ENCODE measurements at regions of chr10 and their contacts with region 1.

Region 1: GRCh38 chr10:69408318-69409175 is 8.2 kb downstream of the TACR2 start:
- DNase-seq: peak; percentile 85 to 96
- H3K4me3 ChIP-seq: peak overlapping the region; percentile 50; the same call in 1 of the 2 replicates
- H3K27ac ChIP-seq: no peak overlapping the region
- H3K4me1 ChIP-seq: peaks cover 26% of the 10 kb centered on the region
- H3K27me3 ChIP-seq: no peaks in the 10 kb centered on the region
- CTCF ChIP-seq: peak; percentile 54

Region 2: DNA sequence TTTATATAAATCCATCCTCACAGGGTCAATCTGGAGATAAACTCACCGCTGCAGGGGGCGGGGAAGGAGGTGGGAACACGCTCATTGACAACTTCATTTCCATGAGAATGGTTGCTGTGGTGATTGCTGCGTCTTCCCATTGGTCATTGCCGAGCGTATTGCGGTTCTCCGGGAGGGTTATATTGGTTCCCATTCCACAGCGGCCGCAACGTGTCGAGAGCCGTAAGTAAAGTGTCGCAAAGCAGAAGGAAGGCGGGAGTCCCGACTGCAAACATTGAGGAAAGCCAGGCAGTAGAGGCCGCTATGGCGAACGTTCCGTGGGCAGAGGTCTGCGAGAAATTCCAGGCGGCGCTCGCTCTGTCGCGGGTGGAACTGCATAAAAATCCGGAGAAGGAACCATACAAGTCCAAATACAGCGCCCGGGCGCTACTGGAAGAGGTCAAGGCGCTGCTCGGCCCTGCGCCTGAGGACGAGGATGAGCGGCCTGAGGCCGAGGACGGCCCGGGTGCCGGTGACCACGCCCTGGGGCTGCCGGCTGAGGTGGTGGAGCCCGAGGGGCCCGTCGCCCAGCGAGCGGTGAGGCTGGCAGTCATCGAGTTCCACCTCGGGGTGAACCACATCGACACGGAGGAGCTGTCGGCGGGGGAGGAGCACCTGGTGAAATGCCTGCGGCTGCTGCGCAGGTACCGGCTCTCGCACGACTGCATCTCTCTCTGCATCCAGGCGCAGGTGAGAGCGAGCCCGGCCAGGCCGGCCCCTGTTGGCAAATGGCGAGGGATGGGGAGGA is 419.8 kb before region 1 on chr10 and contains the start of gene KIFBP:
- CTCF ChIA-PET with region 1: no interaction called
- POLR2A ChIA-PET with region 1: no interaction called
- intact Hi-C with region 1: loop called (anchors 5 kb)
- DNase-seq: peak; percentile 94 to 97
- H3K4me3 ChIP-seq: peak within 1 kb of the TSS; percentile 84
- H3K27ac ChIP-seq: 0 out of 2 replicates have a peak within 1 kb of the TSS, but pooled peaks have one; percentile 20
- H3K4me1 ChIP-seq: peaks cover 19% of the 10 kb centered on the region
- H3K27me3 ChIP-seq: no peaks in the 10 kb centered on the region
- CTCF ChIP-seq: peak; percentile 62; the same call in 1 of the 2 replicates
- total RNA-seq, gene KIFBP: 26.0 and 30.1 TPM in 2 replicates

Region 3: GRCh38 chr10:69123747-69124562 is 284.6 kb before region 1 on chr10 and contains the start of gene VPS26A:
- CTCF ChIA-PET with region 1: no interaction called
- POLR2A ChIA-PET with region 1: no interaction called
- intact Hi-C with region 1: loop called (anchors 2 kb)
- DNase-seq: peak; percentile 91 to 100
- H3K4me3 ChIP-seq: peak within 1 kb of the TSS; percentile 61
- H3K27ac ChIP-seq: peak within 1 kb of the TSS; percentile 78
- H3K4me1 ChIP-seq: peaks cover 19% of the 10 kb centered on the region
- H3K27me3 ChIP-seq: no peaks in the 10 kb centered on the region
- CTCF ChIP-seq: 0 out of 2 replicates have a peak, but pooled peaks have one; percentile 20
- total RNA-seq, gene VPS26A: 90.0 and 102 TPM in 2 replicates

Region 4: GRCh38 chr10:69237528-69238159 is 170.9 kb before region 1 on chr10:
- CTCF ChIA-PET with region 1: interaction called, 7 read pairs
- POLR2A ChIA-PET with region 1: no interaction called
- intact Hi-C with region 1: loop called (anchors 5 kb)
- DNase-seq: peak; percentile 62 to 90
- H3K4me3 ChIP-seq: no peak overlapping the region
- H3K27ac ChIP-seq: peak overlapping the region; percentile 37; the same call in 1 of the 2 replicates
- H3K4me1 ChIP-seq: peaks cover 28% of the 10 kb centered on the region
- H3K27me3 ChIP-seq: no peaks in the 10 kb centered on the region
- CTCF ChIP-seq: peak; percentile 98

Region 5: GRCh38 chr10:69506834-69507721 is 98.5 kb after region 1 on chr10:
- CTCF ChIA-PET with region 1: interaction called, 3 read pairs
- POLR2A ChIA-PET with region 1: no interaction called
- intact Hi-C with region 1: loop called (anchors 2 kb)
- DNase-seq: peak; percentile 38 to 68
- H3K4me3 ChIP-seq: no peak overlapping the region
- H3K27ac ChIP-seq: peak overlapping the region; percentile 52
- H3K4me1 ChIP-seq: peaks cover 11% of the 10 kb centered on the region
- H3K27me3 ChIP-seq: no peaks in the 10 kb centered on the region
- CTCF ChIP-seq: no peak

Region 6: DNA sequence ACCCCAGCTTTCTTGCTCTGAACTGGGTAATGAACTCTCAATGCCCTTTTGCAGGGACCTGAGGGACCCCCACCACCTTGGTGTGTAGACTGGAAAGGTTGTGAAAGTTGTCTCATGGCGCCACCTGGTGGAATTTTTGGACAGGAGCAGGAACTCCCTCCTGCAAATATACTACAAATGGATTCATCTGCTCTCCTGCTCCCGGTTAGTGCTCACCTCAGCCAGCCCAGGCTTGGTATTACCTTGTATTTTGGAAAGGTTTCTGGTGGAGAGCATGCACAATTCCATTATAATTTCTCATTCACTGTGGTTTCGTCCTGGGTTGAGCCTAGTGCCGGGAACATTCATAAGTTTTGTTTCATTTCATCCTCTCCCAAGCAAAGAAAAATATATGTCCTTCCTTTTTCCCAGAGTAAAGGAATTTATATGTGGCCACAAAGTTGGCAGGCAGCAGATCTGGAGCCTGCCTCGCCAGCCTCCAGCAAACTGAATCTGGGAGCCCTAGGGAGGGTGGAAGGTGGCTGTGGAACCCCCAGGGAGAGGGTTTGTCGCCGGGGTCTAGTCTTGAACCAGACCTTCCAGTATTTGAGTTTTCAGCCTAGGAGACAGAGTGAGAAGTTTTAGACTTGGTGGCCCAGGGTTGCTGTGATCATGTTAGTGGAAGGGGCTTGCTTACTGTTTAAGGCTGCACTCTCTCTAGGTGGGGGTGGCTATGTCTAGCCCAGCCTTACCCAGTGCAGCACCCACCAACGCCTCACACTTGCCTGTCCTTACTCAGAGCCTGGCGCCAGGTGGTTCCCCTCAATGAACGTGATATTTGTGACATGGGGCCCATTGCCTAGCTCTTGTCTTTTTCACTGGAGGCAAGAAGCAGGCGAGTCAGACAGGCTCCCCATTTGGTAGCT is 231.0 kb after region 1 on chr10:
- CTCF ChIA-PET with region 1: interaction called, 7 read pairs
- POLR2A ChIA-PET with region 1: no interaction called
- intact Hi-C with region 1: loop called (anchors 1 kb)
- DNase-seq: peak; percentile 46 to 62
- H3K4me3 ChIP-seq: no peak overlapping the region
- H3K27ac ChIP-seq: no peak overlapping the region
- H3K4me1 ChIP-seq: peaks cover 10% of the 10 kb centered on the region
- H3K27me3 ChIP-seq: peaks cover 14% of the 10 kb centered on the region; the same call in 1 of the 2 replicates
- CTCF ChIP-seq: peak; percentile 98

Region 7: GRCh38 chr10:69800109-69800508 is 391.6 kb after region 1 on chr10:
- CTCF ChIA-PET with region 1: no interaction called
- POLR2A ChIA-PET with region 1: no interaction called
- intact Hi-C with region 1: no loop called
- DNase-seq: peak; percentile 48 to 49
- H3K4me3 ChIP-seq: no peak overlapping the region
- H3K27ac ChIP-seq: no peak overlapping the region
- H3K4me1 ChIP-seq: peaks cover 32% of the 10 kb centered on the region; the same call in 1 of the 2 replicates
- H3K27me3 ChIP-seq: no peaks in the 10 kb centered on the region
- CTCF ChIP-seq: peak; percentile 82